ENCODE measurements at regions of chr2 and their contacts with region 1.

Region 1: GRCh38 chr2:78963881-78964280 is 61.6 kb upstream of the REG3G start:
- DNase-seq: no peak
- H3K4me3 ChIP-seq: no peak overlapping the region
- H3K27ac ChIP-seq: no peak overlapping the region
- H3K4me1 ChIP-seq: no peaks in the 10 kb centered on the region
- H3K27me3 ChIP-seq: no peaks in the 10 kb centered on the region
- CTCF ChIP-seq: no peak

Region 2: GRCh38 chr2:78876316-78876688 is 87.6 kb before region 1 on chr2:
- CTCF ChIA-PET with region 1: no interaction called
- POLR2A ChIA-PET with region 1: no interaction called
- intact Hi-C with region 1: loop called (anchors 5 kb)
- DNase-seq: no peak
- H3K4me3 ChIP-seq: no peak overlapping the region
- H3K27ac ChIP-seq: no peak overlapping the region
- H3K4me1 ChIP-seq: peaks cover 3% of the 10 kb centered on the region
- H3K27me3 ChIP-seq: no peaks in the 10 kb centered on the region
- CTCF ChIP-seq: no peak

Region 3: DNA sequence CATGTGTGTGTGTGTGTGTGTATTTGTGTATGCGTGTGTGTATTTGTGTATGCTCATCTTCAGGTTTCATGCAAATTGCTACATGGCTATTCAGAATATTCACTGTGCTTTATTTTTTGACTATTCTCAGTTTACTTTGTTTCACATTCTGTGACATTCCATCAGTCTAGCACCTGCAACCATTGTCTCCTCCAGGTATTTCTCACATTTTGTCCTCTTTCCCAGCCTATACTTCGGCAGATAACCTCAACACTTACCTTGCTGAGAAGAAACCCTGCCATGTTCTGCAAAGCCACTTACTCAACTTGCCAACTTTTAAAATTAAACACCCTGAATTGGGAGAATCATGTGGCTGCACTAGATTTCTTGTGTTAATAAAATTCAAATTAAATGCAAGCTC is 331.1 kb after region 1 on chr2:
- CTCF ChIA-PET with region 1: no interaction called
- POLR2A ChIA-PET with region 1: no interaction called
- intact Hi-C with region 1: no loop called
- DNase-seq: no peak
- H3K4me3 ChIP-seq: no peak overlapping the region
- H3K27ac ChIP-seq: no peak overlapping the region
- H3K4me1 ChIP-seq: no peaks in the 10 kb centered on the region
- H3K27me3 ChIP-seq: no peaks in the 10 kb centered on the region
- CTCF ChIP-seq: no peak